CD8-positive, alpha-beta memory T cell (primary cell): ENCODE measurements at regions of chr1 and their contacts with region 1.

Region 1: DNA sequence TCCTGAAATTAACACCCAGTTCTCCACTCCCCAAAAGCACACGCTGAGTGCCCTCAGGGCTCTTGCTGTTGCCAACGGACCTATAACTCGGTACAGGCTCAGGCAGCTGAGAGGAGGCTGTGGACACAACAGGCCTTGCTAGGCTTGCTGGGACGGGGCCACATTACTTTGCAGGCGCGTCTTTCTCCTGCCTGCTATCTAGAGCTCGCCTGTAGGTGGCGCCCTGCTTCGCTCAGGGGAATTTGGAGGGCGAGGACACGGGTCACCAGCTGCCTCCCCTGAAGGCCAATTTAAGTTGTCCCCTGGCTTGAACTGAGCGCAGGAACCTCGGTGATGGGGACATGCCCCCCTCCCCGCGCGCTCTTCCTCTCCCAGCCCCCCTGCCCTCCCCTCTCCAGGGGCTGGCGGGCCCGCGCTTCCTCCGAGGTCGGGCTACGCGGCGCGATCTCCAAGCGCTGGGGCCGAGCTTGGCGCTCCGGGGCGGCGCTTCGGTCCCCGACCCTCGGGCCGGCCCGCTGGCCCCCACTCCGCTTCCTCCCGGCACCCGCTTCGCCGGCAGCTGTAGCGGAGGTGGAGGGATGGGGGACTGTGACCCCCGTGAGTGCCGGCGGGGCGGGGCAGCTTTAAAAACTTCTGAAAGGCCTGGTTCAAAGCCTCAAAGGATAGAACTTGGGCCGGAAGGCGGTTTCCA is 32.4 kb upstream of the NFIA start:
- DNase-seq: peak; percentile 79 to 90 (median 82)
- H3K4me3 ChIP-seq: peak overlapping the region; percentile 52
- H3K4me3 Mint-ChIP-seq: peak overlapping the region; percentile 81 to 92 (median 85)
- H3K27ac ChIP-seq: peak overlapping the region; percentile 61
- H3K27ac Mint-ChIP-seq: peak overlapping the region in 3 of 8 donors; percentile 47 to 79 (median 61)
- H3K4me1 ChIP-seq: peaks cover 14% of the 10 kb centered on the region
- H3K4me1 Mint-ChIP-seq: peaks cover 28 to 40% (median 31%) of the 10 kb centered on the region in 3 donors
- H3K27me3 ChIP-seq: no peaks in the 10 kb centered on the region
- H3K27me3 Mint-ChIP-seq: peaks cover 22 to 25% of the 10 kb centered on the region in 2 donors

Region 2: GRCh38 chr1:60978421-60979357 is 71.3 kb before region 1 on chr1:
- CTCF ChIA-PET with region 1: interaction called, 17 read pairs
- POLR2A ChIA-PET with region 1: no interaction called
- DNase-seq: peak; percentile 4 to 66 (median 20)
- H3K4me3 ChIP-seq: no peak overlapping the region
- H3K4me3 Mint-ChIP-seq: no peak overlapping the region
- H3K27ac ChIP-seq: no peak overlapping the region
- H3K27ac Mint-ChIP-seq: peak overlapping the region in 1 of 8 donors; percentile 15
- H3K4me1 ChIP-seq: no peaks in the 10 kb centered on the region
- H3K4me1 Mint-ChIP-seq: peaks cover 0 to 4% (median 0%) of the 10 kb centered on the region in 3 donors
- H3K27me3 ChIP-seq: no peaks in the 10 kb centered on the region
- H3K27me3 Mint-ChIP-seq: peaks cover 0 to 3% of the 10 kb centered on the region in 2 donors

Region 3: DNA sequence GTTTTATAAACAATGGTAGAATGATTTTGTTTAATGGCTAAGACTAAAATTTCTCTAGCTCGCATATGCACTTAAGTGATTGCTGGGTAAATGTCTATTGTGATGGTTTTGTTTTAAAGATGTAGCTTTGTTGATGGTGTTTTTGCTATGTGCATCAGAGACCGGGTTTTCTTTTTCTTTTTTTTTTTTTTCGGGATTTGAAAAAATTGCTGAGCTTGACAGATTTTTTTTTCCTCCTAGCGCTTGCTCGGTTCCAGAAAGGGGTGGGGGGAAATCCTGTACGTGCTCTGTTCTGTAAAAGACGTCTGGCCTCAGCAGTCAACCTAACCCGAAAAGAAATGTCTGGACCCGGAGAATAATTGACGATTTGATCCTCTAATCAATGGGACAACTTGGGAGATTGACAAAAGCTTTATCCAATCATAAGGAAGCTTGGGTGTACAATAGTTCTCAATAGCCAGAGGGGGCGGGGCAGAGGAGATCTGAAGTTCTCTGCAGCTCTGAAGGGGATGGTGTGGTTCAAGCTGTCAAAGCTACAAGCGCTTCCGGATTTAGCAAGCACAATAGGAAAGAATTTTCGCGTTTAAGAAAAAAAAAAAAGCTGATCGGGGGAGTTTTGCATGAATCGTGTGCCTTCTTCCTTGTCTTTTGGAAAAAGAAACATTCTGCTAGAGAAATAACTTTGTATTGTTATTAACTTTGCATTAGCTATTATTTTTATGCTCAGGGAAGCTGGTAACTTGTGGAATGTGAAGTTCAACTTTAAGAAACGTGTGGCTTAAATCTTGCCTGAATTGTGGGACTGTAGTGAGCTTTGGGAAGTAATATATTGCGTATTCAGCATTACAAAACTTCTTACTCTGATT is 27.9 kb after region 1 on chr1:
- CTCF ChIA-PET with region 1: interaction called, 53 read pairs
- POLR2A ChIA-PET with region 1: interaction called, 29 read pairs
- DNase-seq: peak; percentile 83 to 95 (median 94)
- H3K4me3 ChIP-seq: peak overlapping the region; percentile 61
- H3K4me3 Mint-ChIP-seq: peak overlapping the region; percentile 89 to 98 (median 93)
- H3K27ac ChIP-seq: peak overlapping the region; percentile 83
- H3K27ac Mint-ChIP-seq: peak overlapping the region; percentile 92 to 98 (median 97)
- H3K4me1 ChIP-seq: peaks cover 43% of the 10 kb centered on the region
- H3K4me1 Mint-ChIP-seq: peaks cover 44 to 50% (median 49%) of the 10 kb centered on the region in 3 donors
- H3K27me3 ChIP-seq: no peaks in the 10 kb centered on the region
- H3K27me3 Mint-ChIP-seq: peaks cover 0 to 5% of the 10 kb centered on the region in 2 donors

Region 4: DNA sequence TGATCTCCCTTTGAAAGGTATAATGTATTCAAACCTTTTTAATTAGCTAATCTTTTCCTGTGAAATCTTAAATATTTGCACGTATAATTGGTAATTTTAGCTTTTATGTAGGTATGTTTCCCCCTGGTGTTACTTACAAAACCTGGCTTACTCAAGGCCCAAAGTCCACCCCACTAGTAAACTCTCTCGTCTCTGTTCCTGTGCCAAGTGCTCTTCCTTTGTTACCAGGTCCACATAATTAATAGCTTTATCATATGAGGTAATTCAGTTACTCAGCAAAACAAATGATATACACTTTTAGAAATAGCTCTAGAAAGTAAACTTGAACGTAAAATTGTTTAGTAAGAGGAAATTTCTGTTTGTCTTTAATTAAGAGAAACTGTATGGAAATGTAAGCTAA is 69.1 kb after region 1 on chr1:
- CTCF ChIA-PET with region 1: interaction called, 17 read pairs
- POLR2A ChIA-PET with region 1: interaction called, 3 read pairs
- DNase-seq: no peak
- H3K4me3 ChIP-seq: no peak overlapping the region
- H3K4me3 Mint-ChIP-seq: no peak overlapping the region
- H3K27ac ChIP-seq: no peak overlapping the region
- H3K27ac Mint-ChIP-seq: no peak overlapping the region
- H3K4me1 ChIP-seq: no peaks in the 10 kb centered on the region
- H3K4me1 Mint-ChIP-seq: no peaks in the 10 kb centered on the region
- H3K27me3 ChIP-seq: no peaks in the 10 kb centered on the region
- H3K27me3 Mint-ChIP-seq: no peaks in the 10 kb centered on the region

Region 5: DNA sequence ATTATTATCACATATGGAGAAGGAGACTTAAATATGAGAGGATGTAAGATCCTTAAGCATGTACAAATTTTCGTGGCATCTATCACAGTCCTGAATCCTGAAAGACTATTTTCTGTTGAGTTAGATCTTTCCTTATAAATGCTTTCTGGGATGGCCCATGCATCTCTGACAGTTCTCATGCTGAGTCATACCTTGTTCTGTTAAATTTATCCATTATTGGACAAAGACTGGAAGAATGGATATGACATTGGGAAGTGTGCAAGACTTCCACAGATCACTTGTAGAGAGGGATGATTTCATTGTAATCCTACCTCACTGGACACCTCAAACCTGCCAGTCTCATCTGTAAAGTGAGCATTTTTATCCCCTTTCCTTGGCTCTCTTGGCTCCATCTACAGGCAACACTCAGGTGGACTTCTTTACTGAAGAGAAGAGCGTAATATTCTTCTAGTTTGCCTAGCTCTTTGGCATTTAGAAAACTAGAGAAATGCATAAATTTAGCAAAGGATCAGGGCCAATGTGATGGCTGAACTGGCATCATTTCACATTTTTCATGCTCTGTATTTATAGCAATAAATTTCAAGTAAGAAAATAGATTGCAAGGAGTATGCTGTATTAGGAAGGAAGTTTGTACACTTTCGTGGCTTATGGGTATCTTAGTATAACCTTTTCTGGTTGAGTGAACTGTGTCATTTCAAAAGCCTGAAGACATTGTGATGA is 160.6 kb after region 1 on chr1:
- CTCF ChIA-PET with region 1: interaction called, 44 read pairs
- POLR2A ChIA-PET with region 1: no interaction called
- DNase-seq: no peak
- H3K4me3 ChIP-seq: no peak overlapping the region
- H3K4me3 Mint-ChIP-seq: no peak overlapping the region
- H3K27ac ChIP-seq: no peak overlapping the region
- H3K27ac Mint-ChIP-seq: peak overlapping the region in 1 of 8 donors; percentile 28
- H3K4me1 ChIP-seq: no peaks in the 10 kb centered on the region
- H3K4me1 Mint-ChIP-seq: peaks cover 2 to 10% (median 8%) of the 10 kb centered on the region in 3 donors
- H3K27me3 ChIP-seq: no peaks in the 10 kb centered on the region
- H3K27me3 Mint-ChIP-seq: peaks cover 0 to 1% of the 10 kb centered on the region in 2 donors

Region 6: DNA sequence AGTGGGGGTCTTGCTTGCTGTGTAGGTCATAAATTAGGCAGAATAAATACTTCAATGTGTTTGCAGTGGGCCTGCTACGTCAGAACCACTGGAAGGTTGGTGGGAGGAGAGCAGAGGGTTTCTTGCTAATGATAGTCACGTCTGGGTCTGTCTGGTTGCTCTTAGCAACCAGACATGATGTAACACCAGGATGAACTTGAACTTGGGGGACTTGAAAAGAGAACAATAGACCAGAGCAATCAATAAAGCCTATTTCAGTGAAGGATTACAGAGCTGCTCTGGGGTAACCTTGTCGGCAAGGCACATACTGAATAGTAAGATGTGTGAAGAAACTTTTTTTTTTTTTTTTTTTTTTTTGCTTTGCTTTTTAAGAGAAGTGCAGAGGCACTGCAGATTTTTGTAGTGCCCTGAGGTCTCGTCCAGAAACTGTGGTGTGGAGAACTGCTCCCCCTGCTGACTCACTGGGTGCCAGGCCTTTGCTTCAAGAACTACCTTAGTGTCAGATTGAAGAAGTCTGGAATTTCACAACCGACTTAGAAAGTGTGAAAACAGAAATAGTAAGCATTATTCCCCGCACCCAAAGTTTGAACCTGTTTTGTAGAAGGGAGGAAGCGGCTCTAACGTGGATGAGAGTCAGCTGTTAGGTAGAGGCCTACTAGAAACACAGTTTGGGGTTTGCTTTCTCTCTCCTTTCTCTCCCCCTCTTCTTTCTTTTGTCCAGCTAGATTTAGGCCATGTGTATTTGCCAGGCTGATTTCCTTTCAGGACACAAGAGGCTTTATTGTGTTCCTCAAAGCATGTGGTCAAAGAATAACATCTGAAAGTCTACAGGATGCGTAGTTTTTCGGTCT is 403.3 kb after region 1 on chr1:
- CTCF ChIA-PET with region 1: interaction called, 27 read pairs
- POLR2A ChIA-PET with region 1: no interaction called
- DNase-seq: peak; percentile 42 to 83 (median 52)
- H3K4me3 ChIP-seq: no peak overlapping the region
- H3K4me3 Mint-ChIP-seq: peak overlapping the region in 2 of 7 donors; percentile 37 to 60
- H3K27ac ChIP-seq: no peak overlapping the region
- H3K27ac Mint-ChIP-seq: peak overlapping the region; percentile 35 to 97 (median 82)
- H3K4me1 ChIP-seq: no peaks in the 10 kb centered on the region
- H3K4me1 Mint-ChIP-seq: peaks cover 6 to 21% (median 8%) of the 10 kb centered on the region in 3 donors
- H3K27me3 ChIP-seq: no peaks in the 10 kb centered on the region
- H3K27me3 Mint-ChIP-seq: no peaks in the 10 kb centered on the region